ENCODE measurements at regions of chr4 and their contacts with region 1.

Region 1: DNA sequence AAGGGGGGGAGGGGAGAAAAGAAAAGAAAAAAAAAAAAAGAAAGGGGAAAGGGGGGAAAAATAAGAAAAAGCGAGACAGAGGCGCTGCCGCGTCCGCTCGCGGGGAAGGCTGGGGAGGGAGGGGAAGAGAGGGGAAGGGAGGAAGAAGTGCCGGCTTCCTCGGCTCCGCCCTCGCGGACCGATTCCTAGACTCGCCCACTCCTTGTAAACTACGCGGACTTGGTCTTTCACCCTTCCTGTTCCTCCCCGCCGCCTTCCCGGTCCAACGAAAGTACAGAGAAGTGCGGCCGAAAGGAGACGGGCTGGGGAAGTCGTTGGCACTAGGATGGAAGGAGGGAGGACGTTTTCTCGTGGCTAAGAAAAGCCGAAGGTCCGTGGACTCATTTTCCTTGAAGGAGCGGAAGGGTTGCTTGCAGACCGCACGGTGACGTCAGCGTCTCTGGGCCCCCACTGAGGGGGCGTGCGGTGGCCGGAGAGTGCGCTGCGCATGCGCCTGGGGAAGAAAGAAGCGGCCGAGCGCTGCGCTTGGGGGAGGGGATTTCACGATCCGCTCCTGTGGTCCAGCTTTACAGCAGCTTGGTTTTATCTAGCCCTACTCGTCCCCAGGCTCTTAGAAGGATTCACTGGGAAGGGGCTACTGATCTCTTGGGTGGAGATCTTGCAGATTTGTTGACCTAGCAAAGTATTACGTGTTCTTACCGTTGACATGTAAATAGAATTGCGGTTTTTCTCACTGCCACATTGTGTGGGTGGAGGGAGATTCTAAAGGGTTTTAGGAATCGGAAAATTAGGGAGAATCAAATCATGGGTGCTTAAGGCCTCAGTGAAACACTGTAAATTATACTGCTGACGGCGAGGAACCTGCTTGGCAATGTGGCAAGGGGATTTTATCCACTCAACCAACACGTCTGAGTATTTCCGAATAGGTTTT is at the start of gene CCNI:
- DNase-seq: peak; percentile 94 to 97 (median 96)
- H3K4me3 ChIP-seq: peak within 1 kb of the TSS; percentile 93 to 98
- H3K4me3 Mint-ChIP-seq: peak within 1 kb of the TSS in 6 of 8 donors; percentile 97 to 99 (median 99)
- H3K27ac ChIP-seq: peak within 1 kb of the TSS; percentile 99
- H3K27ac Mint-ChIP-seq: peak within 1 kb of the TSS in 6 of 7 donors; percentile 100
- H3K4me1 ChIP-seq: peaks cover 49% of the 10 kb centered on the region
- H3K4me1 Mint-ChIP-seq: peaks cover 28 to 39% (median 32%) of the 10 kb centered on the region in 4 donors
- H3K27me3 ChIP-seq: no peaks in the 10 kb centered on the region
- H3K27me3 Mint-ChIP-seq: peaks cover 1 to 4% of the 10 kb centered on the region in 2 donors
- total RNA-seq, gene CCNI: 353 to 360 TPM

Region 2: DNA sequence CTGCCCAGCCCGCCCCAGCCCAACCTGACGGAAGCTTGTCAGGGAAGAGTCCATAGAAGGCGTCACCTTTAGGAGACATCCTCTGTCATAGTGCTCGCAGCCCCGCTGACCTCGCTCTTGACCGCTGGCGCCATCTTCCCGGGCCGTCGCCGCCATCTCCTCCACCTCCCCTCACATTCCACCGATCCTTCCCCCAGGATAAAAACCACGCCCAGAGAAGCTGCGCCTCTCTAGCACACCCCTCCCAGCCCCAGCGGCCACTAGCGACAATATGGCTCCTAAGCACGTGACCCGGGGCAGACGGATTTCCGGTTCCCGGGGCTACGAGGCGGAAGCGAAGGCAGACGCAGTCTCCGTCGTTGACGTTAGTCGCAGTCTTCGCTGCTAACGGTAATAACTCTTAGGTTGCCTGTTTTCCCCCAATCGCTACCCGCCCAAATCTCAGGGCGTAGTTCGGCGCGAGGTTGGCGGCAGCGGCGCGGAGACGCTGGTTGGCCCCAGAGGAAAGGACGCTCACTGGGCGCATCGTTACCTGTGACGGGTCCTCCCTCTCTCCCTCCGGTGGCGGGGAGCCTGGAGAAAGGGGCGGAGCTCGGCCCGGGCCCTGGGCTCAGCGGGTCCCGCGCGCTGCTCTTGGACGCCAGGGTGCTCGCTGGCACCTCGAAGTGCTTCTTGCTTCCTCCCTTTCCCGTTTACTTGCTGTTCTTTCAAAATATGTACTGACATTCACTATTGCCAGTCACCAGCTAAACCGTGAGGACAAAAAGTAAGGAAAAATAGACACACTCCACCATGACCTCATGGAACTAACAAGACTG is 1561.8 kb before region 1 on chr4 and contains the starts of genes RCHY1 and THAP6:
- CTCF ChIA-PET with region 1: no interaction called
- POLR2A ChIA-PET with region 1: no interaction called
- intact Hi-C with region 1: loop called (anchors 5 kb)
- DNase-seq: peak; percentile 92 to 96 (median 94)
- H3K4me3 ChIP-seq: peak within 1 kb of the TSS; percentile 68 to 99
- H3K4me3 Mint-ChIP-seq: no peak within 1 kb of the TSS
- H3K27ac ChIP-seq: peak within 1 kb of the TSS; percentile 97
- H3K27ac Mint-ChIP-seq: peak within 1 kb of the TSS in 3 of 7 donors; percentile 99 to 100 (median 100)
- H3K4me1 ChIP-seq: peaks cover 74% of the 10 kb centered on the region
- H3K4me1 Mint-ChIP-seq: peaks cover 35 to 51% (median 38%) of the 10 kb centered on the region in 4 donors
- H3K27me3 ChIP-seq: no peaks in the 10 kb centered on the region
- H3K27me3 Mint-ChIP-seq: no peaks in the 10 kb centered on the region
- total RNA-seq, gene RCHY1: 36.6 to 40.9 TPM
- total RNA-seq, gene THAP6: 38.1 to 43.4 TPM

Region 3: GRCh38 chr4:76148142-76148865 is 927.8 kb before region 1 on chr4 and contains the start of gene NUP54:
- CTCF ChIA-PET with region 1: no interaction called
- POLR2A ChIA-PET with region 1: no interaction called
- intact Hi-C with region 1: loop called (anchors 1 kb)
- DNase-seq: peak; percentile 92 to 94 (median 93)
- H3K4me3 ChIP-seq: peak within 1 kb of the TSS; percentile 54 to 88
- H3K4me3 Mint-ChIP-seq: peak within 1 kb of the TSS; percentile 92 to 100 (median 98)
- H3K27ac ChIP-seq: peak within 1 kb of the TSS; percentile 88
- H3K27ac Mint-ChIP-seq: peak within 1 kb of the TSS; percentile 84 to 100 (median 98)
- H3K4me1 ChIP-seq: peaks cover 34% of the 10 kb centered on the region
- H3K4me1 Mint-ChIP-seq: peaks cover 21 to 46% (median 34%) of the 10 kb centered on the region in 4 donors
- H3K27me3 ChIP-seq: no peaks in the 10 kb centered on the region
- H3K27me3 Mint-ChIP-seq: no peaks in the 10 kb centered on the region
- total RNA-seq, gene NUP54: 49.3 to 52.8 TPM

Region 4: GRCh38 chr4:76993787-76994641 is 82.1 kb before region 1 on chr4:
- CTCF ChIA-PET with region 1: no interaction called
- POLR2A ChIA-PET with region 1: interaction called, 9 read pairs
- intact Hi-C with region 1: loop called (anchors 1 kb)
- DNase-seq: peak; percentile 75 to 89 (median 80)
- H3K4me3 ChIP-seq: peak overlapping the region in 1 of 2 donors; percentile 5
- H3K4me3 Mint-ChIP-seq: peak overlapping the region; percentile 71 to 88 (median 81)
- H3K27ac ChIP-seq: no peak overlapping the region
- H3K27ac Mint-ChIP-seq: peak overlapping the region; percentile 83 to 96 (median 90)
- H3K4me1 ChIP-seq: peaks cover 64% of the 10 kb centered on the region
- H3K4me1 Mint-ChIP-seq: peaks cover 39 to 65% (median 51%) of the 10 kb centered on the region in 4 donors
- H3K27me3 ChIP-seq: no peaks in the 10 kb centered on the region
- H3K27me3 Mint-ChIP-seq: peaks cover 0 to 1% of the 10 kb centered on the region in 2 donors

Region 5: GRCh38 chr4:77156533-77156911 is 80.4 kb after region 1 on chr4:
- CTCF ChIA-PET with region 1: no interaction called
- POLR2A ChIA-PET with region 1: interaction called, 60 read pairs
- intact Hi-C with region 1: loop called (anchors 1 kb)
- DNase-seq: peak; percentile 99
- H3K4me3 ChIP-seq: peak overlapping the region; percentile 87 to 98
- H3K4me3 Mint-ChIP-seq: peak overlapping the region; percentile 92 to 100 (median 98)
- H3K27ac ChIP-seq: peak overlapping the region; percentile 77
- H3K27ac Mint-ChIP-seq: peak overlapping the region; percentile 97 to 99 (median 98)
- H3K4me1 ChIP-seq: peaks cover 35% of the 10 kb centered on the region
- H3K4me1 Mint-ChIP-seq: peaks cover 16 to 54% (median 24%) of the 10 kb centered on the region in 4 donors
- H3K27me3 ChIP-seq: no peaks in the 10 kb centered on the region
- H3K27me3 Mint-ChIP-seq: peaks cover 0 to 6% of the 10 kb centered on the region in 2 donors

Region 6: GRCh38 chr4:77819843-77820648 is 743.9 kb after region 1 on chr4:
- CTCF ChIA-PET with region 1: no interaction called
- POLR2A ChIA-PET with region 1: interaction called, 5 read pairs
- intact Hi-C with region 1: loop called (anchors 10 kb)
- DNase-seq: peak; percentile 96 to 97 (median 97)
- H3K4me3 ChIP-seq: peak overlapping the region; percentile 80 to 86
- H3K4me3 Mint-ChIP-seq: peak overlapping the region; percentile 90 to 98 (median 94)
- H3K27ac ChIP-seq: peak overlapping the region; percentile 98
- H3K27ac Mint-ChIP-seq: peak overlapping the region; percentile 94 to 100 (median 99)
- H3K4me1 ChIP-seq: peaks cover 62% of the 10 kb centered on the region
- H3K4me1 Mint-ChIP-seq: peaks cover 34 to 66% (median 46%) of the 10 kb centered on the region in 4 donors
- H3K27me3 ChIP-seq: no peaks in the 10 kb centered on the region
- H3K27me3 Mint-ChIP-seq: peaks cover 0 to 4% of the 10 kb centered on the region in 2 donors

Measured in CD4-positive, alpha-beta memory T cell (primary cell).